ENCODE measurements at regions of chr9 and their contacts with region 1.

Region 1: DNA sequence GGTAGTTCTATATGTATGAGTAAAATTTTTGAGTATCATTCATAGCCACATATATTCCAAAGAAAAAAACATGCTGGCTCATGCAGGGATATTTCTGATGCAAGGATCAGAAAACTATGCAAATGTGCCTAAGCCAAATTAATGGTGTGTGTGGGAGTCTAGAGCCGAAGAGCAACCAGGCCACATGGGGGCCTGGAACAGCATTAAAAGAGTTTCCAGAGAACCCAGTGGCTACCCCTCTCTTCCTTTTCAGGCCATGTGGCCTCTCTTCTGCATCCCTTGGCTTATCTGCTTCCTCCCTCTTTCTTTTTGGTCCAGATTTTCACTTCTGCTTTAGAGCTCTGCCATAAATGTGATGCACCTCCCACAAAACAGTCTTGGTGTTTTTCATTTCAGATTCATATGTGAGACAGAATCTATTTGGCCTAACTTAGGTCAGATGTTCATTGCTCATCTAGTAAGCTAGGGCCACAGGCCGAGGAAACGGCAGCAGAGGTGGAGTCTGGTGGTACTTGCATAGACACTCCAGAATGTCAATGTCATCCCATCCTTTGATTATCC is 300.0 kb downstream of the SH3GL2 start:
- H3K4me3 Mint-ChIP-seq: no peak overlapping the region
- H3K27ac Mint-ChIP-seq: no peak overlapping the region
- H3K4me1 Mint-ChIP-seq: no peaks in the 10 kb centered on the region
- H3K27me3 Mint-ChIP-seq: no peaks in the 10 kb centered on the region

Region 2: GRCh38 chr9:17660158-17660557 is 218.7 kb before region 1 on chr9:
- intact Hi-C with region 1: no loop called
- H3K4me3 Mint-ChIP-seq: no peak overlapping the region
- H3K27ac Mint-ChIP-seq: no peak overlapping the region
- H3K4me1 Mint-ChIP-seq: no peaks in the 10 kb centered on the region
- H3K27me3 Mint-ChIP-seq: no peaks in the 10 kb centered on the region

Region 3: DNA sequence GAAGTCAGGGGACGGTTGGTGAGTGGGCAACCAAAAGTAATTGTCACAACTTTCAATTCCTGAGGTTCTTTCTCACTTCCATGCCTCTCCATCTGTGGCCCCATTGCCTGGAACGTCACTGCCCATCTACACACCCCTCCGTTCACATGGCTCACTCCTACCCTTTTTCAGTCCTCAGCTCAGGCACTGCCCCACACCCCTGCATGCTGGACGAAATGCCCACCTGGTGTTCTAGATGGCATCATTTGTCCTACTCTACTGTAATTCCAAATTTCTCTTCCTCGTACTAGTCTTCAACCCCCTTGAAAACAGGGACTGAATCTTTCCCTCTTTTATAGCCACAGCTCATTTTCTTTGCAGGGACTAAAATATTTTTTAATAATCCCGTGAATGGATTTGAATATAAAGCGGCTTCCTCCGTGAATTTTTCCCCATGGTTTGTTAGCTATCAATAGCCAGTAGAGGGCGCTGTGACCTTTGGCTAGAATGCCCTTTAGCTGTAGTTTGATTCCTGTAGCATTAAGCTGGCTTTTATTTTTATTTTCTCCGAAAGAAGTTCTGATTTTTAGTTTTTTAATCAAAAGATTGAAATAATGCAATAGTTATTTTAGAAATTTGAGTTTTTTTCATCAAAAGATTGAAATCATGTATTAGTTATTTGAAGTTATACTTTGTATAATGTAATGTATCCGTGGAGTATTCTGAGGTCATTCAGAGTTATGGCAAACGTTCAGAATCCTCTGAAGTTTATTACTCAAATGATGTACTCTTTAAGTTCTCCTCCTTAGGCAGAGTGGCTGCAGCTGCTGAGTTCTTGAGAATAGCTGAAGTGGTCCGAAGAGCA is 67.9 kb before region 1 on chr9:
- intact Hi-C with region 1: no loop called
- H3K4me3 Mint-ChIP-seq: no peak overlapping the region
- H3K27ac Mint-ChIP-seq: no peak overlapping the region
- H3K4me1 Mint-ChIP-seq: no peaks in the 10 kb centered on the region
- H3K27me3 Mint-ChIP-seq: no peaks in the 10 kb centered on the region

Region 4: DNA sequence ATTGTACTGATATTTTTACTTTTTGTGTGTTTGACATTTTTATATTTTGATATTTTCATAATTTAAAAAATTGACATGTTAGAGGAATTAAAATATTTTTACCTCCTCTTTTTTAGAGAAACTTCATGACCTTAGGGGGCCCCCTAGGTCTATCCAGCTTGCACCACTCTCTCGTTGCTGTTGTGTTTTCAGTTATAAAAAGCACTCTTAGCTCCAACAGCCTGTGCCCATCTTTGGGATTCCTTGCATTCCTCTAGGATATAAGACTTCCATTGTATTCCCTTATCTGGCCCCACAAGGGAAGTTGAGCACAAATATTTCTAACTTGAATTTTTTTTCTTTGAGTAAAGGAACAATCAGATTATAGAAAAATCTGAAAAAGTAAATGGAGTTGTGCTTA is 54.7 kb before region 1 on chr9:
- intact Hi-C with region 1: loop called (anchors 10 kb)
- H3K4me3 Mint-ChIP-seq: no peak overlapping the region
- H3K27ac Mint-ChIP-seq: no peak overlapping the region
- H3K4me1 Mint-ChIP-seq: no peaks in the 10 kb centered on the region
- H3K27me3 Mint-ChIP-seq: no peaks in the 10 kb centered on the region

Region 5: GRCh38 chr9:17928228-17928627 is 49.3 kb after region 1 on chr9:
- intact Hi-C with region 1: loop called (anchors 10 kb)
- H3K4me3 Mint-ChIP-seq: no peak overlapping the region
- H3K27ac Mint-ChIP-seq: no peak overlapping the region
- H3K4me1 Mint-ChIP-seq: no peaks in the 10 kb centered on the region
- H3K27me3 Mint-ChIP-seq: no peaks in the 10 kb centered on the region